Activated B cell treated with CpG ODN at 0.5 μM for 24 hours (primary cell): ENCODE measurements at regions of chr7 and their contacts with region 1.

Region 1: DNA sequence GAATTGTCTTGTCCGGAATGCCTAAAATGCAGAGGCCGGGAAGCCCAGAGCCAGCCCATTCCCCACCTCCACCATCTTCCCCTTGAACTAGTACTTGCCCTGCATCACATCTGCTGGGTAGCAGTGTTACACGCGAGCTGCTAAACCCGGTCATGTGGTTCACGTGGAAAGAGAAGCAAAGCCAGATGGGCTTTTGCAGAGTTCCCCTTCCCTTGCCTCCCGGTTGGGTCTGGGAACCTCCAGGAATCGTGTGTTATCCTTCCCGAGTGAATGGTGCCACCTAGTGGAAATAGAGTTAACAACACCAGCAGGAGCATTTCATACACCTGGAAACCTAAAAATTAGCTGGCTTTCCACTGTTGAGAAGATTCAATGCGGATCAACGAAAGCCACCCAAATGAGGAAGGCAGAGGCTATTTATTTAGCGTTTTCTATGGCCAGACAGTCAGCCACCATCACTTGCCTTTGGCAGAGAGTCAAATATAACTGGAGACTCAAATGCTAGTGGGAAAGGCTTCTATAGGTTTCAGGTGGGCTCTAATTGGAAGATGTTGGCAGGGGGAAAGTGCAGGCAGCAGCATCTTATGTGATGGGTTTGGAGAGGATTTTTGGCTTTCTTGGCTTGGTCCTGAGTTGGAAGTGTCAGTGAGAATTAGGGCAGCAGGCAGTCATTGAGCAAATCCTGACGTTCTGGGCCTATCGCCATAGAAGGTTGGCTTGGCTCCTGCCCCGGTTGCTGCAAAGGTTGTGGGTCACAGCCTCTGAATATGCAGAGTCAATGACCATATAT is 12.9 kb upstream of the DENND2A start:
- DNase-seq: peak; percentile 28
- ATAC-seq: no peak
- H3K4me3 Mint-ChIP-seq: no peak overlapping the region
- H3K27ac Mint-ChIP-seq: no peak overlapping the region
- H3K4me1 Mint-ChIP-seq: peaks cover 20% of the 10 kb centered on the region
- H3K27me3 Mint-ChIP-seq: peaks cover 2% of the 10 kb centered on the region
- CTCF ChIP-seq: peak; percentile 31

Region 2: DNA sequence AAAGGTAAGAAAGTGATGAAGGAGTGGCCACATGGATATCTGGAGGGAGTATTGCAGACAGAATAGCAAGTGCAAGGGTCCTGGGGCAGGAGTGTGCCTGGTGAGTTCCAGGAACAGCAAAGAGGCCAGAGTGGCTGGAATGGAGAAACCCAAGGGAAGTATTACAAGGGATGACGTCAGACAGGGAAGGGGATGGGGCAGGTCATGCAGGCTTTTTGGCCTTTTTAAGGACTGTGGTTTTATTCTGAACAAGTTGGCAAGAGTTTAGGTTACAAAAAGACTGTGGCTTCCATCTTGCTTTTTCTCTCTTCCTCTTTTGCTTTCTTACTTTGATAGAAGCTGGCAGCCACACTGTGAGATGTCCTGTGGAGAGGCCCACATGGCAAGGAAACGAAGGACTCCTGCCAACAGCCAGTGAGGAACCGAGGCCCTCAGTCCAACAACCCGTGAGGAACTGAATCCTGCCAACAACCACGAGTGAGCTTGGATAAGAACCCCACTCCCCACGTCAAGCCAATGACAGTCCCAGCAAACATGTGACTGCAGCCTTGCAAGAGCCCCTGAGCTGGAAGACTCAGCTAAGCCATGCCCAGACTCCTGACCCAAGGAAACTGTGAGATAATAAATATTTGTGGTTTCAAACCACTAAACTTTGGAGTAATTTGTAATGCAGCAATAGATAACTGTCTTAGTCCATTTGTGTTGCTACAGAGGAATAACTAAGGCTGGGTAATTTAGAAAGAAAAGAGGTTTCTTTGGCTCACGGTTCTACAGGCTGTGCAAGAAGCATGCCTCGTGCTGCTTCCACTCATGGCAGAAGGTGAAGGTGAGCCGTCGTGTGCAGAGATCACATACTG is 456.9 kb before region 1 on chr7:
- CTCF ChIA-PET with region 1: no interaction called
- POLR2A ChIA-PET with region 1: no interaction called
- intact Hi-C with region 1: loop called (anchors 2 kb)
- DNase-seq: no peak
- ATAC-seq: no peak
- H3K4me3 Mint-ChIP-seq: no peak overlapping the region
- H3K27ac Mint-ChIP-seq: peak overlapping the region; percentile 32
- H3K4me1 Mint-ChIP-seq: peaks cover 5% of the 10 kb centered on the region
- H3K27me3 Mint-ChIP-seq: no peaks in the 10 kb centered on the region
- CTCF ChIP-seq: no peak

Region 3: GRCh38 chr7:140206616-140207389 is 446.7 kb before region 1 on chr7:
- CTCF ChIA-PET with region 1: no interaction called
- POLR2A ChIA-PET with region 1: no interaction called
- intact Hi-C with region 1: no loop called
- DNase-seq: no peak
- ATAC-seq: no peak
- H3K4me3 Mint-ChIP-seq: no peak overlapping the region
- H3K27ac Mint-ChIP-seq: no peak overlapping the region
- H3K4me1 Mint-ChIP-seq: peaks cover 59% of the 10 kb centered on the region
- H3K27me3 Mint-ChIP-seq: no peaks in the 10 kb centered on the region
- CTCF ChIP-seq: no peak